H1 (cell line): ENCODE measurements at regions of chr17 and their contacts with region 1.

Region 1: DNA sequence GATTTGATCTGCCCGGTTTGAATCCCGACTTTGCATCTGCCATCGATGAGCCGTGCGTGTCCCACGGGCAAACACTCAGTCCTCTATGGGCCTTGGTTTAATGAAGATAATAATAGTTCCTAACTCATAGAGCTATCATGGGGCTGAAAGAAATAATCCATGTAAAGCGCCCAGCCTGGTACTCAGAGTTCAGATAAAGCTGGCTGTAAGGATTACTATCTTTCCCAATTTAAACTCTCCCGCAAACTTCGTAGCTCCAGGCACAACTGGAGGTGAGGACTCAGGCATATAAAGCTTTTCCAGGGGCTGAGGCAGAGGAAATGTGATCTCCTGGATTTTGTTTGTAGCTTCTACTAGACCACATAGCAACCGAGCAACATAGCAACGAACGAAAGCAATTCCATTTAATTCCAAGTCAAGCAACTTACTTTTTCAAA is 16.3 kb downstream of the ALOX15 start:
- DNase-seq: no peak
- H3K4me3 ChIP-seq: no peak overlapping the region
- H3K27ac ChIP-seq: no peak overlapping the region
- H3K4me1 ChIP-seq: no peaks in the 10 kb centered on the region; a peak in 1 of 7 replicates
- H3K27me3 ChIP-seq: 0 out of 7 replicates have a peak, but pooled peaks cover 0 to 2% (median 0%) of the 10 kb centered on the region in 4 experiments
- CTCF ChIP-seq: no peak
- EP300 ChIP-seq: no peak
- POLR2A ChIP-seq: no peak
- RAD21 ChIP-seq: no peak

Region 2: GRCh38 chr17:4576729-4577322 is 48.4 kb before region 1 on chr17:
- CTCF ChIA-PET with region 1: interaction called, 170 read pairs
- POLR2A ChIA-PET with region 1: no interaction called
- DNase-seq: peak in 1 of 2 experiments; percentile 67
- H3K4me3 ChIP-seq: no peak overlapping the region; a peak in 1 of 8 replicates
- H3K27ac ChIP-seq: no peak overlapping the region
- H3K4me1 ChIP-seq: peaks cover 4 to 19% (median 14%) of the 10 kb centered on the region in 4 experiments
- H3K27me3 ChIP-seq: no peaks in the 10 kb centered on the region
- CTCF ChIP-seq: no peak
- EP300 ChIP-seq: no peak
- POLR2A ChIP-seq: no peak
- RAD21 ChIP-seq: peak in 1 of 2 experiments; percentile 16; a peak in 1 of 4 replicates

Region 3: GRCh38 chr17:4607773-4608187 is 17.4 kb before region 1 on chr17:
- CTCF ChIA-PET with region 1: interaction called, 19 read pairs
- POLR2A ChIA-PET with region 1: no interaction called
- DNase-seq: no peak
- H3K4me3 ChIP-seq: no peak overlapping the region
- H3K27ac ChIP-seq: no peak overlapping the region
- H3K4me1 ChIP-seq: peaks cover 0 to 10% (median 2%) of the 10 kb centered on the region in 4 experiments; a peak in 3 of 7 replicates
- H3K27me3 ChIP-seq: no peaks in the 10 kb centered on the region; a peak in 1 of 7 replicates
- CTCF ChIP-seq: no peak
- EP300 ChIP-seq: no peak
- POLR2A ChIP-seq: no peak
- RAD21 ChIP-seq: no peak